Calu3 (cell line): ENCODE measurements at regions of chrX and their contacts with region 1.

Region 1: DNA sequence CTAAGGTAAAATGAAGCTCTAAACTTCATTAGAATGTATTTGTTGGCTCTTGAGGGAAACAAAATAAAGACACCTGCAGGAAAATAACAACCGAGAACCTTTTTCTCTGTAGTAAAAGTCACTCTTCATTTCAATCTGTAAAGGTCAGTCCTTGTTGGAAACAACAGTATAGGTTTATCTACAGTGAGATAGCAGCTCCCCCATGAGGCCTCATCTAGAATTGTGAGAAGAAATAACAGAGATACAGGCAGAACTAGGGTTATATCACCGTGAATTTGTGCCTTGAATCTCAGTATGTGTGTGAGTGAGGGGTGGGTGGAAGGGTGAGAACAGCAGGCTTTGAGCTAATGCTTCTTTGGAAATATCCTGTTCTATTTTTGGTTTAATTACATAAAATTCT is 107.8 kb upstream of the FMR1 start:
- DNase-seq: peak; percentile 1
- H3K4me3 Mint-ChIP-seq: no peak overlapping the region
- H3K27ac Mint-ChIP-seq: no peak overlapping the region
- H3K4me1 Mint-ChIP-seq: no peaks in the 10 kb centered on the region
- H3K27me3 Mint-ChIP-seq: no peaks in the 10 kb centered on the region
- CTCF ChIP-seq: no peak

Region 2: DNA sequence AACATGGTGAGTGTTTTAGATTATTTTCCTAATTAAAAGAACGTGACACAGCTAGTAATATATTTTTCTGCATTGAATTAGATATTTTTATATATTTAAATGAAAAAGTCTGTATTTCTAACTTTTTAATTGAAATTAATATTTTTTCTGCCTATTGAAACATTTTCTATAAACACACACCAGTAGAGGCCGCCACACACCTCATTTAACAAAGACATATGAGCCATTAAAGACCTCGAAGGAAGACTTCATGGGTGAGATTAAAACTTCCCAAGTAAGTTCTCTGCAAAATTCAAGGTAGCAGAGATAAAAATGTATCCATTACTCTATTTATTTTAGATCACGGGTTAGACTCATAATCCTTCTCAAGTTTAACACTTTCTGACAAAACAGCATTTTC is 1978.1 kb before region 1 on chrX:
- CTCF ChIA-PET with region 1: no interaction called
- intact Hi-C with region 1: loop called (anchors 10 kb)
- DNase-seq: peak; percentile 4
- H3K4me3 Mint-ChIP-seq: no peak overlapping the region
- H3K27ac Mint-ChIP-seq: no peak overlapping the region
- H3K4me1 Mint-ChIP-seq: no peaks in the 10 kb centered on the region
- H3K27me3 Mint-ChIP-seq: no peaks in the 10 kb centered on the region
- CTCF ChIP-seq: no peak

Region 3: GRCh38 chrX:147476008-147476407 is 327.9 kb before region 1 on chrX:
- CTCF ChIA-PET with region 1: no interaction called
- intact Hi-C with region 1: loop called (anchors 10 kb)
- DNase-seq: peak; percentile 8
- H3K4me3 Mint-ChIP-seq: no peak overlapping the region
- H3K27ac Mint-ChIP-seq: no peak overlapping the region
- H3K4me1 Mint-ChIP-seq: no peaks in the 10 kb centered on the region
- H3K27me3 Mint-ChIP-seq: no peaks in the 10 kb centered on the region
- CTCF ChIP-seq: no peak

Region 4: DNA sequence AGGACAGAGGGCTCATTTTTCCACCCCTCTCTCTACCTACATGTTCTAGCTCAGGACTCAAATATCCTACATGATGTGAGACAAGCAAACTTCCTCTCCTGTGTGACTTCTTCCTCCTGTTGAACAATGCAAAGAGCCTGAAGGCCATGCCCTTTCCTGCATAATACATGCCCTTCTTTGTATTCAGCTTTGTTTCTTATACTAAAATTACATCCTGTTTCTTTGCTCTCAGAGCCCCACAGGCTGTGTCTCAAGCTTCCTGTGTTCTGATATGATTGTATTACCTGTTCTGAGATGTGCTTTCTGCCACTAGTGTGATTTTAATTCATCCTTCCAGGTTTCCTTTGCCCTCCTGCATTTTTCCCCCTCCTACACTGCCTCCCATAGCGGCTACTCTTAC is 530.0 kb after region 1 on chrX:
- CTCF ChIA-PET with region 1: no interaction called
- intact Hi-C with region 1: no loop called
- DNase-seq: no peak
- H3K4me3 Mint-ChIP-seq: no peak overlapping the region
- H3K27ac Mint-ChIP-seq: no peak overlapping the region
- H3K4me1 Mint-ChIP-seq: no peaks in the 10 kb centered on the region
- H3K27me3 Mint-ChIP-seq: no peaks in the 10 kb centered on the region
- CTCF ChIP-seq: no peak